ENCODE measurements at regions of chr12 and their contacts with region 1.

Region 1: GRCh38 chr12:77049767-77050353 is 15.5 kb downstream of the E2F7 start:
- DNase-seq: no peak
- ATAC-seq: peak in 3 of 4 donors; percentile 51 to 76 (median 55)
- H3K4me3 ChIP-seq: no peak overlapping the region
- H3K27ac ChIP-seq: no peak overlapping the region
- H3K4me1 ChIP-seq: no peaks in the 10 kb centered on the region
- H3K27me3 ChIP-seq: peaks cover 0 to 5% (median 0%) of the 10 kb centered on the region in 9 donors
- CTCF ChIP-seq: peak; percentile 63 to 82 (median 72)
- POLR2A ChIP-seq: no peak

Region 2: GRCh38 chr12:76611533-76611932 is 438.3 kb before region 1 on chr12:
- intact Hi-C with region 1: no loop called
- DNase-seq: no peak
- ATAC-seq: peak in 1 of 4 donors; percentile 51
- H3K4me3 ChIP-seq: no peak overlapping the region
- H3K27ac ChIP-seq: no peak overlapping the region
- H3K4me1 ChIP-seq: no peaks in the 10 kb centered on the region
- H3K27me3 ChIP-seq: no peaks in the 10 kb centered on the region
- CTCF ChIP-seq: no peak
- POLR2A ChIP-seq: no peak

Region 3: GRCh38 chr12:77679686-77680085 is 629.8 kb after region 1 on chr12:
- intact Hi-C with region 1: loop called in 4 of 10 experiments (anchors 5 to 10 kb)
- DNase-seq: no peak
- ATAC-seq: no peak
- H3K4me3 ChIP-seq: no peak overlapping the region
- H3K27ac ChIP-seq: no peak overlapping the region
- H3K4me1 ChIP-seq: peaks cover 0 to 2% (median 0%) of the 10 kb centered on the region in 12 donors
- H3K27me3 ChIP-seq: no peaks in the 10 kb centered on the region
- CTCF ChIP-seq: no peak
- POLR2A ChIP-seq: no peak

Region 4: DNA sequence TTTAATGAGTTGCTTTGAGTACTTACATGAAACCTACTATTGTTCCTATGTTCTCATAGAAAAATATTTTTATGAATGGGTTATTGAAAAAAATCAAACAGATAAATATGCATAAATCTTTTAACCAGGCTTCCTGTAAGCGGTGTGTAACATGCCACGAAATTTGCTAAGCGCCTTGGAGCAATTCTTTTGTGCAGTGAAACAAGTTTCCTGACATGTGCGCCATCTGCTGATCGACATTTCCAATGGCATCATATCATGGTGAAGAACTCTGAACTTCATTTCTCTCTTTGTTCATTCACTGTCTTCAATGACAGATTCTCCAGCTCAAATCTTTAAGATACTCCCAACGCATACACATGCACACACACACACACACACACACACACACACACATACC is 635.3 kb after region 1 on chr12:
- intact Hi-C with region 1: loop called in 7 of 10 experiments (anchors 5 to 10 kb)
- DNase-seq: peak; percentile 33 to 55 (median 50)
- ATAC-seq: peak; percentile 58 to 82 (median 72)
- H3K4me3 ChIP-seq: peak overlapping the region in 6 of 12 donors; percentile 1 to 22 (median 11)
- H3K27ac ChIP-seq: no peak overlapping the region
- H3K4me1 ChIP-seq: peaks cover 0 to 6% (median 0%) of the 10 kb centered on the region in 12 donors
- H3K27me3 ChIP-seq: no peaks in the 10 kb centered on the region
- CTCF ChIP-seq: peak in 11 of 12 donors; percentile 33 to 70 (median 54)
- POLR2A ChIP-seq: no peak

Region 5: DNA sequence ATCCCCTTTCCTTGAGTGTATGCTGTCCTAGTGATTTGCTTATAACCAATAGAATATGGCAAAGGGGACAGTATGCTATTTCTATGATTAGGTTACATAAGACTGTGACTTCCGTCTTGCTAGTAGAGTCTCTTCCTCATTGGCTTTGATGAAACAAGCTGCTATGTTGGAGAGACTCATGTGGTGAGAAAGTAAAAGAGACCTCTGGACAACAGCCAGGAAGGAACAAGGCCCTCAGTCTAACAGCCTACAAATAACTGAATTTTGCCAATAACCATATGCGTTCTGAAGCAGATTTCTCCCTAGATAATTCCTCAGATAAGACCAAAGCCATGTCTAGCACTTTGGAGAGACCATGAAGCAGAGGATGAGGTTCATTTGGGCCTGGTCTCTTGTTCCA is 646.3 kb after region 1 on chr12:
- intact Hi-C with region 1: loop called in 1 of 10 experiments (anchors 10 kb)
- DNase-seq: no peak
- ATAC-seq: no peak
- H3K4me3 ChIP-seq: no peak overlapping the region
- H3K27ac ChIP-seq: no peak overlapping the region
- H3K4me1 ChIP-seq: no peaks in the 10 kb centered on the region
- H3K27me3 ChIP-seq: no peaks in the 10 kb centered on the region
- CTCF ChIP-seq: no peak
- POLR2A ChIP-seq: no peak